ENCODE measurements at regions of chr3 and their contacts with region 1.

Region 1: DNA sequence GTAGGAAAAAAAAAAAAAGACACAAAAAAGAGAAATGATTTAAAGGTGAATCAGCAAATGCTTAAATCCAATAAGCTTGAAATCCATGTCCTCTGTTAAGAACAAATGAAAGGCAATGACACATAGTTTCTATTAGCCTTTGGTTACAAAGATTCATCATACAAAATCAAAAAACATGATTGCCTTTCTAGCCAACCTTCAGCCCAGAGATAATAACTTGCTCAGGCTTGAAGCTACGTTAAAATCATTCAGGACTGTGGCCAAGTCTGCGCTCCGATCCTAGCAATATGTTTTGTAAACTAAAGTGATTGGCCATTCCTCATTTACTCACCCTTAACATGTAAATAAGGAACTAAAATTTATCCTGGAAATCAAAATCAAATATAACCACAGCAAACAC is 556.7 kb downstream of the FGF12 start:
- DNase-seq: no peak
- H3K4me3 ChIP-seq: no peak overlapping the region
- H3K4me3 Mint-ChIP-seq: peak overlapping the region; percentile 27
- H3K27ac Mint-ChIP-seq: peak overlapping the region; percentile 83
- H3K4me1 ChIP-seq: peaks cover 21% of the 10 kb centered on the region
- H3K4me1 Mint-ChIP-seq: peaks cover 6% of the 10 kb centered on the region
- H3K27me3 ChIP-seq: no peaks in the 10 kb centered on the region
- H3K27me3 Mint-ChIP-seq: no peaks in the 10 kb centered on the region
- CTCF ChIP-seq: no peak

Region 2: GRCh38 chr3:192082730-192083660 is 87.7 kb before region 1 on chr3:
- CTCF ChIA-PET with region 1: no interaction called
- POLR2A ChIA-PET with region 1: no interaction called
- intact Hi-C with region 1: loop called (anchors 1 kb)
- DNase-seq: no peak
- H3K4me3 ChIP-seq: no peak overlapping the region
- H3K4me3 Mint-ChIP-seq: no peak overlapping the region
- H3K27ac Mint-ChIP-seq: no peak overlapping the region
- H3K4me1 ChIP-seq: peaks cover 34% of the 10 kb centered on the region
- H3K4me1 Mint-ChIP-seq: peaks cover 8% of the 10 kb centered on the region
- H3K27me3 ChIP-seq: no peaks in the 10 kb centered on the region
- H3K27me3 Mint-ChIP-seq: no peaks in the 10 kb centered on the region
- CTCF ChIP-seq: no peak

Region 3: DNA sequence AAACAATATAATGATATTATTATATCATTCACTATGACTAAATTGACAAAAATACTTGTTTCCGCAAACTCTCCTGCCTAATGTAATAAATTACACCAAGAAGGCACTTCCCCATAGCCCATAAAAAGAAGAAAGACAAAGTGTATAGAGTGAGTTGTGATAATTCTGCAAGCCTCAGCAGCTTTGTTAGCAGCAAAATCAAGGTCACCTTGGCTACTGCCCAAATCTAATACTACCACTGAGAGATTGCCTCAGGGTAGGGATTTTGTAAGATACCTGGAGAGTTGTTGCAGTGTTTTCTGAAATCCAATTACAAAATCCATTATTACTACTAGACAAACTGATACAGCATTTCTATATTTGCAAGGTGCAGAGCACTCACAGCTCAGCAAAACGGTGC is 53.2 kb after region 1 on chr3:
- CTCF ChIA-PET with region 1: no interaction called
- POLR2A ChIA-PET with region 1: no interaction called
- intact Hi-C with region 1: no loop called
- DNase-seq: no peak
- H3K4me3 ChIP-seq: no peak overlapping the region
- H3K4me3 Mint-ChIP-seq: no peak overlapping the region
- H3K27ac Mint-ChIP-seq: no peak overlapping the region
- H3K4me1 ChIP-seq: no peaks in the 10 kb centered on the region
- H3K4me1 Mint-ChIP-seq: no peaks in the 10 kb centered on the region
- H3K27me3 ChIP-seq: no peaks in the 10 kb centered on the region
- H3K27me3 Mint-ChIP-seq: no peaks in the 10 kb centered on the region
- CTCF ChIP-seq: no peak

Region 4: DNA sequence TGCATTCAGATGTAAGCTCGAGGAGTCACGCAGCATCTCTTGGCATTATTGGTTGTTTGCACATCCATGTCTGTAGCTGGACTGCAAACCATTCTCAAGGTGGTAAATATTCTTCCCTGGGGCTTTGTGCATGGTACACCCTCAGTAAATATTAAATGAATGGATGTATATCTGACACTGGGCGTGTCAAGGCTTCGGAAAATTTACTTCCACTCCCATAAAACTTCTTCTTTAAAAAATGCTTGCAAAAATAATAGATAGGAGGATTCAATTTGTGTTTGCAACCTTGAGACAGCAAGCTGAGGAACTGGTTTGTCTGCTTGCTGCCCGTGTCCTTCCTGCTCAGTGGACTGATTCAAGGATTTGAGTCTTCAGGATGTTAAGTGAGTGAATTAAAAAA is 102.9 kb after region 1 on chr3:
- CTCF ChIA-PET with region 1: no interaction called
- POLR2A ChIA-PET with region 1: no interaction called
- intact Hi-C with region 1: no loop called
- DNase-seq: no peak
- H3K4me3 ChIP-seq: no peak overlapping the region
- H3K4me3 Mint-ChIP-seq: no peak overlapping the region
- H3K27ac Mint-ChIP-seq: no peak overlapping the region
- H3K4me1 ChIP-seq: peaks cover 11% of the 10 kb centered on the region
- H3K4me1 Mint-ChIP-seq: no peaks in the 10 kb centered on the region
- H3K27me3 ChIP-seq: no peaks in the 10 kb centered on the region
- H3K27me3 Mint-ChIP-seq: no peaks in the 10 kb centered on the region
- CTCF ChIP-seq: no peak

Measured in Caco-2 (cell line).